Caco-2 (cell line): ENCODE measurements at regions of chr10 and their contacts with region 1.

Region 1: DNA sequence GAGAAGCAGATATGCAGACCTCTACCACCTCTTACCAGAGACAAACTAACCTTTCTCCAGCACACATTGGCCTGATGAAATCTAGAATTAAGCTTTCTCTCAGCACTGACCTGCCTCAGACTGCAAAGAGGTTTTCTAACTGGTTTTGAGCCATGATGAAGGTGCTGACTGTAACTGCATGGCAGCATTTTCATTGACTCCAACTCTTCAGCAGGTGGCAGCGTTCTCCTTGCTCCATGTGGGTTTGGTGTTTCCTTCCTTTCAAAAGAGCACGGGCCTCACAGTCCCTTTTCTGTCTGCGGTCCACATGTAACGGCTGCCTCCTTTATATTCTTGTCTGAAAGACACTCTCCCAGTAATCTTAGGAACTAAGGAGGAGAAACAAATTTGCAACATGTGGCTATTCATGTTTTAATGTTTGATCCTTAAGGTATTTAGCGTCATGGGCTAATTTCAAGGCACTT is 12.6 kb downstream of the KLLN start:
- DNase-seq: peak; percentile 65 to 72
- H3K4me3 ChIP-seq: no peak overlapping the region
- H3K4me3 Mint-ChIP-seq: no peak overlapping the region
- H3K27ac Mint-ChIP-seq: no peak overlapping the region
- H3K4me1 ChIP-seq: peaks cover 17% of the 10 kb centered on the region
- H3K4me1 Mint-ChIP-seq: peaks cover 7% of the 10 kb centered on the region
- H3K27me3 ChIP-seq: no peaks in the 10 kb centered on the region
- H3K27me3 Mint-ChIP-seq: no peaks in the 10 kb centered on the region
- CTCF ChIP-seq: peak; percentile 46 to 81

Region 2: GRCh38 chr10:88114368-88114767 is 263.6 kb after region 1 on chr10:
- CTCF ChIA-PET with region 1: interaction called, 7 read pairs
- POLR2A ChIA-PET with region 1: no interaction called
- intact Hi-C with region 1: loop called (anchors 1 kb)
- DNase-seq: peak; percentile 58 to 62
- H3K4me3 ChIP-seq: no peak overlapping the region
- H3K4me3 Mint-ChIP-seq: no peak overlapping the region
- H3K27ac Mint-ChIP-seq: no peak overlapping the region
- H3K4me1 ChIP-seq: peaks cover 2% of the 10 kb centered on the region; the same call in 1 of the 2 replicates
- H3K4me1 Mint-ChIP-seq: peaks cover 13% of the 10 kb centered on the region
- H3K27me3 ChIP-seq: no peaks in the 10 kb centered on the region
- H3K27me3 Mint-ChIP-seq: no peaks in the 10 kb centered on the region
- CTCF ChIP-seq: peak; percentile 64 to 84